AG04449 (cell line): ENCODE measurements at regions of chr1 and their contacts with region 1.

Region 1: GRCh38 chr1:45490626-45491486 is at the start of gene TESK2:
- DNase-seq: peak; percentile 94
- H3K4me3 ChIP-seq: peak within 1 kb of the TSS; percentile 91
- CTCF ChIP-seq: peak; percentile 16

Region 2: DNA sequence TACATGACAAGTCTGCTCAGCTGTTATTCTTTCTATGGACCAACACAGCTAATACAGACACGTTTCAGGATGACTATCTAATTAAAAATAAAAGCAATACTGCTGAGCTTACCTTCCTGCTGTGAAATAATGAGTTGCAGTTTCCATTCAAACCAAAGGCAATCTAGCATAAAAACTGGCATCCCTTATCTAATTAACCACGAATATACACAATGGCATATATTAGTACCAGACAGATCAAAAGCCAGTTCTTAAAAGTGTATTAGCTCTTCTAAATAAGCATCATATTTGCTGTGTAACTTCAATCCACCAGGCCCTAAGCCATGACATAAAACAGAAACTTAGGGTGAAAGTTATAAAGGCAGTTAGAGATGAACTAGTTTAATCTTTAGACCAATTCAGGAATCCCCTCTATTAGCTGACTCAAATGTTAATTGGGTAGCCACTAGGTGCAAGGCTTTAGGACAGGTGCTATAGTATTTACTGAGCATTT is 20.5 kb before region 1 on chr1:
- CTCF ChIA-PET with region 1: interaction called, 18 read pairs
- POLR2A ChIA-PET with region 1: no interaction called
- DNase-seq: no peak
- H3K4me3 ChIP-seq: no peak overlapping the region
- CTCF ChIP-seq: no peak

Region 3: GRCh38 chr1:45769261-45769932 is 278.5 kb after region 1 on chr1:
- CTCF ChIA-PET with region 1: no interaction called
- POLR2A ChIA-PET with region 1: no interaction called
- DNase-seq: peak; percentile 17
- H3K4me3 ChIP-seq: no peak overlapping the region
- CTCF ChIP-seq: no peak